ENCODE measurements at regions of chr19 and their contacts with region 1.

Region 1: DNA sequence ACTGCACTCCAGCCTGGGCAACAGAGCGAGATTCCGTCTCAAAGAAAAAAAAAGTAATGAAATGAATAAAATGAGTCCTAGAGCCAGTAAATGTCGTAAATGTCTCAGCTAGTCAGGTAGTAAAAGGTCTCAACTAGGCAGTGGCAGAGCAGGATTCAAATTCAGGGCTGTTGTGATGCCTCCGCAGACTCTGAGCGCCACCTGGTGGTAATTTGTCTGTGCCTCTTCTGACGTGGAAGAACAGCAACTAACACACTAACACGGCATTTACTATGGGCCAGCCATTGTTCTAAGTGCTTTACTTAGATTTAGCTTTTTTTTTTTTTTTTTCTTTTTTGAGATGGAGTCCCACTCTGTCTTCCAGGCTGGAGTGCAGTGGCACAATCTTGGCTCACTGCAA is 30.2 kb downstream of the CYP2F1 start:
- DNase-seq: peak; percentile 94
- ATAC-seq: peak; percentile 92
- H3K4me3 Mint-ChIP-seq: no peak overlapping the region
- H3K27ac Mint-ChIP-seq: no peak overlapping the region
- H3K4me1 Mint-ChIP-seq: no peaks in the 10 kb centered on the region
- H3K27me3 Mint-ChIP-seq: peaks cover 7% of the 10 kb centered on the region

Region 2: GRCh38 chr19:40592170-40592569 is 552.2 kb before region 1 on chr19:
- CTCF ChIA-PET with region 1: no interaction called
- POLR2A ChIA-PET with region 1: no interaction called
- intact Hi-C with region 1: no loop called
- DNase-seq: no peak
- ATAC-seq: peak; percentile 70
- H3K4me3 Mint-ChIP-seq: no peak overlapping the region
- H3K27ac Mint-ChIP-seq: no peak overlapping the region
- H3K4me1 Mint-ChIP-seq: peaks cover 10% of the 10 kb centered on the region
- H3K27me3 Mint-ChIP-seq: peaks cover 4% of the 10 kb centered on the region

Region 3: GRCh38 chr19:40836754-40837429 is 307.5 kb before region 1 on chr19:
- CTCF ChIA-PET with region 1: no interaction called
- POLR2A ChIA-PET with region 1: no interaction called
- intact Hi-C with region 1: loop called (anchors 10 kb)
- DNase-seq: no peak
- ATAC-seq: no peak
- H3K4me3 Mint-ChIP-seq: no peak overlapping the region
- H3K27ac Mint-ChIP-seq: no peak overlapping the region
- H3K4me1 Mint-ChIP-seq: peaks cover 13% of the 10 kb centered on the region
- H3K27me3 Mint-ChIP-seq: no peaks in the 10 kb centered on the region

Region 4: GRCh38 chr19:40974633-40975037 is 169.8 kb before region 1 on chr19:
- CTCF ChIA-PET with region 1: interaction called, 11 read pairs
- POLR2A ChIA-PET with region 1: no interaction called
- intact Hi-C with region 1: loop called (anchors 1 kb)
- DNase-seq: peak; percentile 88
- ATAC-seq: peak; percentile 68
- H3K4me3 Mint-ChIP-seq: no peak overlapping the region
- H3K27ac Mint-ChIP-seq: no peak overlapping the region
- H3K4me1 Mint-ChIP-seq: peaks cover 20% of the 10 kb centered on the region
- H3K27me3 Mint-ChIP-seq: peaks cover 9% of the 10 kb centered on the region

Region 5: DNA sequence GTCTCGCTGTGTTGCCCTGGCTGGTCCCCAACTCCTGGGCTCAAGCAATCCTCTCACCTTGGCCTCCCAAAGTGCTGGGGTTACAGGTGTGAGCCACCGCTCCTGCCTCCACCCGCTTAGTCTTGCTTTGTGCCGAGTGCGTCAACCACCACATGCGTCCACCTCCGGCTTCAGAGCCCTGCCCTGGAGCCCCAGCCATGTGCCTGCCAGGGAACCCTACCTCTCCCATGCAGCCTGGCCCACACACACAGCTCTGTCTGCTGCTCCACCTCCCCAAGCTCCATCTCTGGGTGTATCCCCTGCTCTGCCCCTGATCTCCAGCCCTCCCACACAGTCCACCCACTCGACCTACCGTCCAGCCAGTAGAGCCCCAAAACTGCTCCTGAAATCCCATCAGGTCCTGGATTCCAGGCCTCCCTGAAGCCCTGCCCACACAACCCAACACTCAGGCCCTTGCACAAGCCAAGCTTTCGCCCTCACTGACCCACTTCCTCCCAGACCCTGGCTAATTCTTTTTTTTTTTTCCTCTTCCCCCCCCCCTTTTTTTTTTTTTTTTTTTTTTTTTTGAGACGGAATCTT is 20.6 kb before region 1 on chr19:
- CTCF ChIA-PET with region 1: interaction called, 9 read pairs
- POLR2A ChIA-PET with region 1: interaction called, 5 read pairs
- intact Hi-C with region 1: loop called (anchors 1 kb)
- DNase-seq: no peak
- ATAC-seq: no peak
- H3K4me3 Mint-ChIP-seq: no peak overlapping the region
- H3K27ac Mint-ChIP-seq: no peak overlapping the region
- H3K4me1 Mint-ChIP-seq: peaks cover 25% of the 10 kb centered on the region
- H3K27me3 Mint-ChIP-seq: no peaks in the 10 kb centered on the region

Region 6: DNA sequence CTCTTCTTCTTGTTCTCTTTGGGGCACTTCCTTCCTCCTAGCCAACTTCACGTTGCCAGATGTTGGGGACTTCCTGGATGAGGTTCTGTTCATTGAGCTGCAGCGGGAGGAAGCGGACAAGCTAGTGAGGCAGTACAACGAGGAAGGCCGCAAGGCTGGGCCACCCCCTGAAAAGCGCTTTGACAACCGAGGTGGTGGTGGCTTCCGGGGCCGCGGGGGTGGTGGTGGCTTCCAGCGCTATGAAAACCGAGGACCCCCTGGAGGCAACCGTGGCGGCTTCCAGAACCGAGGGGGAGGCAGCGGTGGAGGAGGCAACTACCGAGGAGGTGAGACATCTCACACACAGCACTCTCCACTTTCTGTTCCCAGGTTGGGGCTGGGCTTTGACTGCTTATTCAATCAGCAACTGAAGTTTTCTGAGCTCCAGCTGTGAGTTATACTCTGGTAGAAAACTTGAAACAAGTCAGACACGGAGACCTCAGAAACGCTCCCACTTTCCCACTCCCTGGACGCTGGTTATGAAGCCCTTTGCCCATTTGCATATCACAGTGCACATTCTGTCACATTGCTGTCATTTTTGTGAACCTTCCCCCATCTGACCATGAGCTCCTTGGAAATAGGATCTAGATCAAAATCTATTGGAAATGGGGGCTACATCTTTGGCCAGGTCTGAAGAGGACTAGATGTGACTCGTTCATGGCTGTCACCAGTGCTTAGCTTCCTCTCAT is 158.4 kb after region 1 on chr19:
- CTCF ChIA-PET with region 1: no interaction called
- POLR2A ChIA-PET with region 1: no interaction called
- intact Hi-C with region 1: no loop called
- DNase-seq: peak; percentile 86
- ATAC-seq: peak; percentile 82
- H3K4me3 Mint-ChIP-seq: peak overlapping the region; percentile 29
- H3K27ac Mint-ChIP-seq: peak overlapping the region; percentile 95
- H3K4me1 Mint-ChIP-seq: peaks cover 99% of the 10 kb centered on the region
- H3K27me3 Mint-ChIP-seq: no peaks in the 10 kb centered on the region